Breast epithelium (tissue), 4 donors: ENCODE measurements at regions of chr20 and their contacts with region 1.

Region 1: DNA sequence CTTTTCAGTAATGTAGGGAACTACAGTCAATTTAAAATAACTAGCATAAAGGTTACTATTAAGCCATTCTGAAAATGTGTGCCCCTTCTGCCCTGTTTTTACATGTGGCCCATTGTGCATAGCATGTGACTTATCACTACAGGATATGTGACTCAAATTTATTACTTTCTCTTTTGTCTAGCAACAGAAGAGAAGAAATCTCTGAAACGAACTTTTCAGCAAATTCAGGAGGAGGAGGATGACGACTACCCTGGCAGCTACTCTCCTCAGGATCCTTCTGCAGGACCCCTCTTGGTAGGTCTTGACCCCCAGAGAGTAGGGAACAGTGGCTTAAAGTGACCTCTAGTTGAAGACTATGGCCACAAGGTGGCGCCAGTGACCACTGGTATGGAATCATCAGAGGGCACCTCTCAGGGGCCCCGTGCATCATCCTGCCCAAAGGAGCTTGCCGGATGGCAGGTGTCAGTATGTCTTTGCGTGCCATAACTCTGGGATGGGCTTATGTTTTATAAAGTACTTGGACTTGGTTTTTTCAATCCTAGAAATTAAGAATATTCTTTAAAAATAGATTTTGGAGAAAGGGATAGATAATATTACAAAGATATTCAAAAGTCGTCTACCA is 23.9 kb downstream of the RPRD1B start:
- DNase-seq: peak; percentile 62 to 78
- H3K4me3 ChIP-seq: no peak overlapping the region
- H3K27ac ChIP-seq: no peak overlapping the region
- H3K4me1 ChIP-seq: no peaks in the 10 kb centered on the region
- H3K27me3 ChIP-seq: no peaks in the 10 kb centered on the region
- CTCF ChIP-seq: peak; percentile 49 to 85 (median 82)
- POLR2A ChIP-seq: no peak

Region 2: DNA sequence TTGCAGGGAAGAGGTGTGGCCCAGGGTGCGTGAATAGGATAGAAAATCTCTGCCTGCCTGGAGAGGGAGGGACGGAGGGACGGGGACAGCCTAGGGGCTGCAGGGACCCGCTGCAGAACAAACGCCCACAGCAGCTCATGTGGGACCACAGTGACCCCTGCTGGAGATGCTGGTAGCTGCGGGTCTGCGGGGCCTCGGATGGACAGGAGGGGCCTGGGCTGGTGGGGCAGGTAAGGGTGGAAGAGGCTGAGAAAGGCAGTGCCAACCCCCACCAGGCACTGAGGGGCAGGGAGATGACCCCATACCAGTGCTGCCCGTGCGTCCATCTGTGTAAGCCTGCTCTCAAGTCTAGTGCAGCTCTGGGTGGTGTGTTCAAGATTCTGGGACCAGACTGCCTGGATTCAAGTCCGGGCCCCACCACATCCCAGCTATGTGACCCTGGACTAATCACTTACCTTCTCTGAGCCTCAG is 163.7 kb after region 1 on chr20:
- intact Hi-C with region 1: loop called (anchors 5 kb)
- DNase-seq: peak in 1 of 2 donors; percentile 66
- H3K4me3 ChIP-seq: no peak overlapping the region
- H3K27ac ChIP-seq: no peak overlapping the region
- H3K4me1 ChIP-seq: no peaks in the 10 kb centered on the region
- H3K27me3 ChIP-seq: no peaks in the 10 kb centered on the region
- CTCF ChIP-seq: peak; percentile 40 to 76 (median 70)
- POLR2A ChIP-seq: no peak

Region 3: DNA sequence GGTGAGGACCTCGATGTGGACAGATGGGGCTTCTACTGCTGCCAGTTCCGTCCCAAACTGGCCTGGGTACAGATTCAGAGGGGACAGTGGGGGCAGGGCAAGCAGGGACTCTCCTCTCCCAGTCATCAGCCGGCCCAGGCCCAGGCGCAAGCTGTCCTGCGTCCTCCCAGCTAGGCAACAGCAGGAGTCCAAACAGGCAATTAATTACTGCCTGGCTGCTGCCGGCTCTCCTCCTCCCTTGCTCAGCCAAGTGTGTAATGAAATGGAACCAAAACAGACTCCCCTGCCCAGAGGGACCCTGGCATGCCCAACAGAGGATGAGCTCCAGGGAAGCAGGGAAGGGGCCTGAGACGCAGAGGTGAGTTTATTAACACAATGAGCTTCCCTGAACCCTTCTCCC is 649.0 kb after region 1 on chr20:
- intact Hi-C with region 1: no loop called
- DNase-seq: no peak
- H3K4me3 ChIP-seq: no peak overlapping the region
- H3K27ac ChIP-seq: no peak overlapping the region
- H3K4me1 ChIP-seq: no peaks in the 10 kb centered on the region
- H3K27me3 ChIP-seq: peaks cover 0 to 57% of the 10 kb centered on the region in 2 donors
- CTCF ChIP-seq: no peak
- POLR2A ChIP-seq: no peak